PC-3 (cell line): ENCODE measurements at regions of chr4 and their contacts with region 1.

Region 1: DNA sequence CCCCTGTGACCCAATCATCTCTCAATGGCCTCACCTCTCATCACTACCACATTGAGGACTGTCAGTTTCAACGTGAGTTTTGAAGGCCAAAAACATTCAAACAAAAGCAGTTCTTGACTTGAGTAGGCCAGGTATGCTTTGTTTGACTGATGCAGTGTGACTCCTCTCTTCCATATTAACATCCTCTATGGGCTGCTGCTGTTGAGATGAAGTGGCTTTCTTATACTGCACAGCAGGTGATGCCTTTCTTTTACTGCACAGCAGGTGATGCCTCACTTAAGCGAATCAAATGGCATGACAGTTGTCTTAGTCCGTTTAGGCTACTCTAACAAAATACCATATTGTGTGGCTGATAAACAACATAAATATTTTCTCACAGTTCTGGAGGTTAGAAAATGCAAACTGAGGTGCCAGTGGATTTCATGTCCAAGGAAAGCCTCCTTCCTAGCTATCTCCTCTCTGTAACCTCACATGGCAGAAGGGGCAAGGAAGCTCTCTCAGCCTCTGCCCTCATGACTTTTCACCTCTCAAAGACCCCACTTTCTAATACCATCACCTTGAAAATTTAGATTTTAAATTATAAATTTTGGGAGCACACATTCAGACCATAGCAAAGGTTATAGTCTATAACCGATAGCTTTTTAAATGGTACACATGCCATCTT is 2267.9 kb upstream of the AGA start:
- DNase-seq: no peak
- ATAC-seq: no peak
- H3K4me3 ChIP-seq: no peak overlapping the region
- H3K27ac ChIP-seq: no peak overlapping the region
- H3K4me1 ChIP-seq: no peaks in the 10 kb centered on the region
- H3K27me3 ChIP-seq: no peaks in the 10 kb centered on the region
- CTCF ChIP-seq: no peak

Region 2: GRCh38 chr4:180028682-180029081 is 318.6 kb after region 1 on chr4:
- CTCF ChIA-PET with region 1: no interaction called
- POLR2A ChIA-PET with region 1: no interaction called
- intact Hi-C with region 1: loop called (anchors 5 kb)
- DNase-seq: peak; percentile 33
- ATAC-seq: 0 out of 2 replicates have a peak, but pooled peaks have one; percentile 38
- H3K4me3 ChIP-seq: no peak overlapping the region
- H3K27ac ChIP-seq: no peak overlapping the region
- H3K4me1 ChIP-seq: no peaks in the 10 kb centered on the region
- H3K27me3 ChIP-seq: no peaks in the 10 kb centered on the region
- CTCF ChIP-seq: peak; percentile 49